ENCODE measurements at regions of chr19 and their contacts with region 1.

Region 1: GRCh38 chr19:49741210-49741844 is 21.8 kb downstream of the TSKS start:
- DNase-seq: no peak
- H3K4me3 ChIP-seq: no peak overlapping the region
- H3K27ac ChIP-seq: no peak overlapping the region
- H3K27me3 ChIP-seq: no peaks in the 10 kb centered on the region
- CTCF ChIP-seq: no peak

Region 2: DNA sequence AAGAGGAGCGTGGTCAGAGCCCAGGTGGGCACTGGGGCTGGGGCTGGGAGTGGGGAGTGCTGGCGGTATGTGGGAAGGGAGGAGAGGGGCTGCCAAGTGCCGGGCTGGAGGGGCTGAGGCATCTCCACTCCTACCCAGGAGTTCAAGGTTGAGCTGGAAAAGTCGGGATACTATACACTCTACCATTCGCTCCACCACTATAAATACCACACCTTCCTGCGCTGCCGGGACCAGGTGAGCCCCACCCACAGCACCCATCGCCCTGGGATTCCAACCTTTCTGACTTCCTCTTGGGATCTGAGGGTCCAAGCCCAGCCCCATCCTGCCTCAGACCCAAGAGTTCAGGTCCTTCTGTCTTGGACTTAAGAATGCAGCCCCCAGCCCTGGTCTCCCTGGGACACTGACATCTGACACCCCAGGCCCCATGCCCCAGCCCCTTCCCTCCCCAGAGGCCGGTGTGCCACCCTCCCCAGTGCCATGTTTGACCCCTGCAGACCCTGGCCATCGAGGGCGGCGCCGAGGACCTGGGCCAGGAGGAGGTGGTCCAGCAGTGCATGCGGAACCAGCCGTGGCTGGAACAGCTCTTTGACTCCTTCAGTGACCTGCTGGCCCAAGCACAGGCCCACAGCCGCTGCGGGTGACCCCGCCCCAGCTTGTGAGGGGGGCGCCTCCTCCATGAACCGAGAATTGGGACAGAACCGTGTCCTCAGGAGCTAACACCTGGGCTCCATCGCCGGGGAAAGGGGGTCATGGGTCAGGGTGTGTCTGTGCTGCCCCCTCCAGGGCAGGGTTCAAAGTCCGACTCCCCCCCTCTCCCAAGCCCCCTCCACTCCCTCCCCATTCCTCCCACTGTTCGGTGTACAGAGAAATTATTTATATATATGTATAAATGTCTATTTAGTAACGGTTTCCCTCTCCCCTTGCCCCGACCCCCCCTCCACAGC is 116.1 kb before region 1 on chr19:
- intact Hi-C with region 1: no loop called
- DNase-seq: no peak
- H3K4me3 ChIP-seq: no peak overlapping the region
- H3K27ac ChIP-seq: no peak overlapping the region
- H3K27me3 ChIP-seq: no peaks in the 10 kb centered on the region
- CTCF ChIP-seq: no peak

Region 3: GRCh38 chr19:49705919-49706318 is 35.4 kb before region 1 on chr19:
- intact Hi-C with region 1: loop called in 1 of 2 experiments (anchors 5 kb)
- DNase-seq: no peak
- H3K4me3 ChIP-seq: no peak overlapping the region
- H3K27ac ChIP-seq: no peak overlapping the region
- H3K27me3 ChIP-seq: no peaks in the 10 kb centered on the region
- CTCF ChIP-seq: no peak